Right ventricle myocardium inferior (tissue), 1 donor: ENCODE measurements at regions of chr3 and their contacts with region 1.

Region 1: DNA sequence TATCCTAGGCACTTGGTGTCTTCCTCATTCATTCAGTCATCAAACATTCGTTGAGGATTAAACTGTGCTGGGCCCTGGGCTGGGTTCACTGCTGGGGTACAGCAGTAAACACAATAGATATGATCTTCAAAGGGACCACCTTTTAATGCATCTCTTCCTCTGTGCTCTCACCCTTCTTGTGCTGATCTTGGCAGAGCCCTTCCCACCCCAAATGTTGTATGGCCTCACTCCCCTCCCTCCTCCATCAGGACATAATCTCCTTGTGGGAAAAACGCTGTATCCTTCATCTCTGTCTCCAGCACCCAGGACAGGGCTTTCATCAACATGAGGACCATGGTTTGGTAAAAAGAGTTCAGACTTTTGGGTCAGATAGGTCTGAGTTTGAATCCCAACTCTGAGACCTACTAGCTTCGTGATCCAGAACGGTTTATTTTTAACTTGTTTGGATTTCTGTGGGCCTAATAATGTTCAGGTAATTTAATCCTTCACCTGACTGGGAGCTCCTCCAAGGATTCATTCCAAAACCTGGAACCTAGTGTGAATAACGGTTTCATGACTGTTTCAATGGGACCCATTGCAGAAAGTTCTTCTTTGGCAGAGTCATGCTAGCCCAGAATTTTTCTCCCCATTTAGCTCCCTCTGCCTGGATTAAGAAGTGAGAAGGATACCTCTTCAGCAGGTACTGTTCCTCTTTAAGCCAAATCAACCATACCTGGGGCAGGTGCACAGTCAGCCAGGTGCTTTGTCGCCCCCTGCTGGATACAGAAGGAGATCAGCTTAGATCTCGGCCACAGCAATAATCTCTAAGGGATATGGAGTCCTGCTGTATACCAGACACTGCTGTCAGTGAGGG is 5.2 kb upstream of the WNT7A start:
- DNase-seq: no peak
- ATAC-seq: no peak

Region 2: GRCh38 chr3:13657660-13658435 is 227.2 kb before region 1 on chr3:
- intact Hi-C with region 1: loop called (anchors 5 kb)
- DNase-seq: peak; percentile 76
- ATAC-seq: peak; percentile 61

Region 3: GRCh38 chr3:14077310-14077709 is 192.2 kb after region 1 on chr3:
- intact Hi-C with region 1: no loop called
- DNase-seq: no peak
- ATAC-seq: no peak